Common myeloid progenitor, CD34-positive (primary cell): ENCODE measurements at regions of chr9 and their contacts with region 1.

Region 1: DNA sequence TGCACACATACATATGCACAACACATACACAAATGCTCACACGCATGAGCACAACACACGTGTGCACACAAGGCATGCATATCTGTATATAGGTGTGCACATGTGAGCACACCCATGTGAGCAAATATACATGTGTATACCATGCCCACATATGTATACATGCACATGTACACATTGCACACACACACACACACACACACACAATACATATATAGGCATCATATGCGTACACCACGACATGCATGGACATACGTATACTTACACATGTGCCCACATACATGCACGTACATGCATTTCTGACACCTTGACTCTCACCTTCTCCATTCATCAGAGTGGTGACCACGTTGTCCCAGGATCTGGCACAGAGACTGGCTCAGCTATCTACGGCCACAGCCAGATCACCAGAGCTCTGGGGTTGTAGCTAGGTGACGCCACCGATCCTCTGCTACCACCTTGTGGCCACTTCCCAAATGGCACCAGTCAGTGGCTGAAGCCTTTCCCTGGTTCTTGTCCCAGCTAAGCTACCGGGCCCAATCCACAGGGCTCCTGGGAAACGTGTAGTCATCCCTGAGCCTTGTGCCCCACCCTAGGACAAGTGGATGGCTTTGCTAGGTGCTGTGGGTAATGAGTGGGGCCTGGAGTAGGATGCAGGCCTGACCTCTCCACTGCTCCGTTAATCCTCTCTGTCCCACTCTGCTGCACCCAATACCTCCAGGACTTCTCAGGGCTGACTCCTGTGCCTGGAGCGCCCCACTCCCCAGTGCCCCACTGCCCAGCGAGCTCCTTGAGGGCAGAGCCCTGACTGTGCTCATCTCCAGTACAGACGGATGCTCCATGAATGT is 194.4 kb downstream of the RGS3 start:
- DNase-seq: peak; percentile 76 to 87 (median 82)
- H3K4me3 ChIP-seq: no peak overlapping the region
- H3K27ac ChIP-seq: no peak overlapping the region
- H3K4me1 ChIP-seq: peaks cover 0 to 17% (median 8%) of the 10 kb centered on the region in 4 experiments
- H3K27me3 ChIP-seq: no peaks in the 10 kb centered on the region

Region 2: DNA sequence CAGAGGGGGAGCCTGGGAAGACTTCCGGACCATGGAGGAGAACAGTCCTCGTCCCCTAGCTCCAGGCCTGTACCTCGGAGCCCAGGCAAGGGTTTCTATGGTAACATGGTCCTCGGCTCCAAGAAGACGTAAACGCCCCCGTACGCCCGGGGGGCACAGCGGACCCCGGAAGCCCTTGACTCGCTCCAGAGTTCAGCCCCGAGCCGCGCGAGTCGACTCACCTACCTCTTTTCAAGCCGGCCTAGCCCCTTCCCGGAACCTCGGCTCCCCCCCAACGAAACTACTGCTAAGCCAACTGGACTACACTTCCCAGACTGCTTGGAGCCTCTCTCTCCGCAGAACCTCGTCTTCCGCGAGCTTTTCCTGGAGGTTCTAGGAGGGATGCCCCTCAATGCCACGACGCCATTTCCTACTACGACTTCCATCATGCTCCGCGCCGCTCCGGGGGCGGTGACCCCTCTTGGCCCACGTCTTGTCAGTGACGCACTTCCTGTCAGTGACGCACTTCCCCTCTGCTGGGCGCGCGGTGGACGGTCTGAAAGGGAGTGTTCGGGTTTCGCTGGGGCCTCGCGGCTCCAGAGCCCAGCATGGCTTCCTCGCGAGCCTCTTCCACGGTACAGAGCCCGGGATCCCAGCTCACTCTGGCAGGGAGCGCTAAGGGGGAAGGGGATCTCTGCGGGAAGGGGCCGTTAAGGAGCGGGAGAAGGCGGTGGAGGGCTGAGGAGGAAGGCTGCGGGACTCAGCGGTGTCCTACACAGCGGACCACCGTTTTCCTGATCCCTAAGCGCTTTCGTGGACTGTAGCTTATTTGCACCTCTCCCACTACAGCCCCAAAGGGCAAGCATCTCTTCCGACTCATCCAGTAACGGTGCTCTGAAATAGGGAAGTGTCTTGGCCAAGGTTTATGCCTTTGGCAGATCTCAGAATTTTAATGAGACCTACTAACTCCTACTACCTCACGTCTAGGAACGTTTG is 382.5 kb before region 1 on chr9 and contains the starts of genes CDC26 and PRPF4:
- CTCF ChIA-PET with region 1: interaction called, 33 read pairs
- POLR2A ChIA-PET with region 1: no interaction called
- DNase-seq: peak; percentile 99
- H3K4me3 ChIP-seq: peak within 1 kb of the TSS; percentile 69 to 99 (median 82)
- H3K27ac ChIP-seq: peak within 1 kb of the TSS; percentile 98 to 99
- H3K4me1 ChIP-seq: peaks cover 10 to 27% (median 15%) of the 10 kb centered on the region in 4 experiments
- H3K27me3 ChIP-seq: no peaks in the 10 kb centered on the region

Region 3: GRCh38 chr9:113401027-113401792 is 256.7 kb before region 1 on chr9 and contains the start of gene ALAD:
- CTCF ChIA-PET with region 1: interaction called, 60 read pairs
- POLR2A ChIA-PET with region 1: no interaction called
- DNase-seq: peak; percentile 99
- H3K4me3 ChIP-seq: peak within 1 kb of the TSS; percentile 66 to 96 (median 92)
- H3K27ac ChIP-seq: peak within 1 kb of the TSS; percentile 40 to 66
- H3K4me1 ChIP-seq: peaks cover 4 to 22% (median 17%) of the 10 kb centered on the region in 4 experiments
- H3K27me3 ChIP-seq: no peaks in the 10 kb centered on the region

Region 4: GRCh38 chr9:113454914-113455761 is 202.8 kb before region 1 on chr9:
- CTCF ChIA-PET with region 1: interaction called, 88 read pairs
- POLR2A ChIA-PET with region 1: no interaction called
- DNase-seq: peak; percentile 63 to 81 (median 72)
- H3K4me3 ChIP-seq: no peak overlapping the region
- H3K27ac ChIP-seq: peak overlapping the region; percentile 12 to 75
- H3K4me1 ChIP-seq: peaks cover 0 to 22% (median 12%) of the 10 kb centered on the region in 4 experiments
- H3K27me3 ChIP-seq: no peaks in the 10 kb centered on the region

Region 5: GRCh38 chr9:113634596-113635515 is 23.1 kb before region 1 on chr9:
- CTCF ChIA-PET with region 1: interaction called, 20 read pairs
- POLR2A ChIA-PET with region 1: interaction called, 3 read pairs
- DNase-seq: no peak
- H3K4me3 ChIP-seq: no peak overlapping the region
- H3K27ac ChIP-seq: no peak overlapping the region
- H3K4me1 ChIP-seq: peaks cover 0 to 5% (median under 1%) of the 10 kb centered on the region in 4 experiments
- H3K27me3 ChIP-seq: peaks cover 0 to 2% (median 0%) of the 10 kb centered on the region in 5 experiments

Region 6: DNA sequence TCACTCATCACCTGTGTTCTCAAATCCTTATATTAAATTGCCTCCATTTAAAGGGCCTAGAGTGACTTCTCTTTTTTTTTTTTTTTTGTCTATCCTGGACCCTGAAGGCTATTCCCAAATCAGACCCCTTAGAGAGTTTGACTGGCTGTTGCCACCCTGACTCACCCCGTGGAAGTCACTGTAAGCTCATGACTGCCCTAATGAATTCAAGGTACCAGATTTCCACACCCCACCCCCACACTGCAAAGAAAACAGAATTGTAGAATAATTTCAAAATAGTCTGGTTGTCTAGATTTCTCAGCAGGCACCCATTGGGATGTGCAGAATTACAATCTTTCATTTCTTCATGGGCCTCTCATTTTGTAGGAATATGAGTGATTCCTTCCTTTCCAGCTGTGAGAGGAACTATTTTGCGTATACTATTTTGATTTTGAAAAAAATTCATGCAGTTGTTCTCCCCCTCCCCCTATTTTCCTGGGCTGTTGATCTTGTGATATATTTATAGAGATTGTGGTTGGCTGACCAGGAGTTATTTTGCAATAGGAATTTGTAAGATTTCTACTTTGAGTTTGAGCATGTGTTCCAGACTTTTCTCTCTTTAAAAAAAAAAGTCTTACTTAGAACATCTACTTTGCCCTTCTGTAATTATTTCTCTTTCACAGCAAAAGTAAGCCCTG is 297.3 kb after region 1 on chr9:
- CTCF ChIA-PET with region 1: no interaction called
- POLR2A ChIA-PET with region 1: no interaction called
- DNase-seq: peak in 2 of 3 donors; percentile 17 to 20
- H3K4me3 ChIP-seq: no peak overlapping the region
- H3K27ac ChIP-seq: no peak overlapping the region
- H3K4me1 ChIP-seq: peaks cover 0 to 27% (median 17%) of the 10 kb centered on the region in 4 experiments
- H3K27me3 ChIP-seq: no peaks in the 10 kb centered on the region